ENCODE measurements at regions of chr14 and their contacts with region 1.

Region 1: DNA sequence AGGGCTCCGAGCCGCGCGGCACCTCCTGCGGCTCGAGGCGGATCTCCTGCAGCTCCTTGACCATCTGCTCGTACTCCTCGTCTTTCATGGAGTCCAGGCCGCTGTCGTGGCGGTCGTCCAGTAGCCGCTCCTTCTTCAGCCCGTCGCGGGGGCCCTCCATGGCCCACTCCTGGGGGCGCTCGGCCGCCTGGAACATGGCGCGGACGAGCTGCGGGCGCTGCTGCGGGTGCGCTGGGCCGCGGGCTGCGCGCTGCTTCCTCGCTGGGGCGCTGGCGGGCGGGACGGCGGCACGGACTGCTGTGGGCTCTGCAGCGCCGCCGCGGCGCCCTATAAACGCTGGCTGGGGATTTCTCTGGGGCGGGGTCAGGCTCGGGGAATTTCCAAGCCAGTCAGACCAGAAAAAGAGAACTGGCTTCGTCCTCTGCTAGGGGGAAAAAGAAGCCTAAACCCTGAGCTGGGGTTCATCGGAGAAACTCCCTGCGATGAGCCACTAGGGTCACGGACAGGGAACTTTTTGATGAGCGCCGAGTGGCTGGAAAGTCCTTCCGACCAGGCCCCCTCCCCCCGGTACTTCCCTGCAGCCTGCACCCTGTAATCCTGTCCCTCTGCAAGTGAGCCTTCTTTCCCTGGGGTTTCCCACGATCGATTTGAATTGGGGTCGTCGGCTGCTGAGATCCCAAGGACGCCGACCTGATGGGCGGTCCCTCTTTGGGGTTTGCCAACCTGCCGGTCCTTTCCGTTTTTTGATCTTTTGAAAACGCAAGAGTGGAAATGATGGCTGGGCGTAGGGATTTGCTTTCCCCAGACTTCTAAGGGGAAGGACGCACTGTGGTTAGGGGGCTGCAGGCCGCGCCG is at the start of gene NFKBIA:
- DNase-seq: peak; percentile 95

Region 2: DNA sequence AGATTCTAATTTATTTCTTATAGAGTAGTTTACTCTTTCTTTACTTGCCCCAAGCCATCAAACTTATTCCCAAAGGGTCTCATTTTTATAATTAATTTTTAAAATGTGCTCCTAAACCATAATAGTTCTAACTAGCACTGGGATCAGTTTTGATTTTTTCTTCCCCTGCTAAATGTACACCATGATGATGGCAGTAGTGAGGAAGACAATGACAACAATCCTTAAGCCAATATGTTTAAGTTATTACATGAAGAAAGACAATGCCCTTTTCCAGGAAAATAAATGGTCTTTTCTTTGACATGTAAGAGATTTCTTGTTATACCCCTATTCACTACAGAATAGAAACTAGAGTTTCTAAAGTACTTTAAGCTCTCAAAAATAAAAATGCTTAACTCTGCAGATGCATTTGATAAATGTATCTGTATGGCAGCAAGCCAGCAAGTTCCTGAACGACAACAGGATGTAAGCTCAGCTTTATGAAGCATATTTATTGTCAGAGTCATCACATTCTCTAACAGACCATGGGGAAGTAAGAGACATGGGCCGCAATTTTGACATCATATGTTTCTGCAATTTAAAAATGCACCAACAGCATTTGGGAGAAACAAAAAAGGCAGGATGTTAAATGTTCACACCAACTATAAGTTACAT is 738.8 kb before region 1 on chr14:
- in situ Hi-C with region 1: loop called (anchors 25 kb)
- DNase-seq: peak; percentile 32

Region 3: DNA sequence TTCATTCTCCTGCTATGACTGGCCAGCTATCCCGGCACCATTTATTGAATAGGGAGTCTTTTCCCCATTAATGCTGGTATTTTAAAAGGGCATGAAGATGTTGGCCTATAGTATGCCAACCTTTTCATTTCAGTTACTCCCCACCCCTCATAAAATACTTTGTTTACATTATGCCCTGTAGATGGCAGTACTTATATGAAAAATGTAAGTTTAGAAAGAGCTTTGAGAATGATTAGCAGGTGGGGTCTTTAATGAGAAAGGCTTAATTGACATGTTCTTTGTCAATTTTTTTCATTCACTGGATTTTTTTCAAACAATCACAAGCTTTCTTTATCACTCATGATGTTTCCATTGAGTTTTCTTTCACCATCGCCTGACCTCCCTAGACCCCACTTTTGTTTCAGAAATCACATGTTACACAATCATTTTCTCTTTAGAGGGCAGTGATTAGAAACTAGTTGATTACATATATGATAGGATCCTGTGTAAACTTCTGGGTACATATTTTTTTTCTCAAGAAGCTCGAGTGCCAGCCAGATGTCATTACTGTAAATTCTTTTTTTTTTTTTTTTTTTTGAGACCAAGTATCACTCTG is 175.1 kb before region 1 on chr14:
- in situ Hi-C with region 1: loop called (anchors 25 kb)
- DNase-seq: peak; percentile 64

Measured in KBM-7 (cell line).